Calu3 (cell line): ENCODE measurements at regions of chr5 and their contacts with region 1.

Region 1: DNA sequence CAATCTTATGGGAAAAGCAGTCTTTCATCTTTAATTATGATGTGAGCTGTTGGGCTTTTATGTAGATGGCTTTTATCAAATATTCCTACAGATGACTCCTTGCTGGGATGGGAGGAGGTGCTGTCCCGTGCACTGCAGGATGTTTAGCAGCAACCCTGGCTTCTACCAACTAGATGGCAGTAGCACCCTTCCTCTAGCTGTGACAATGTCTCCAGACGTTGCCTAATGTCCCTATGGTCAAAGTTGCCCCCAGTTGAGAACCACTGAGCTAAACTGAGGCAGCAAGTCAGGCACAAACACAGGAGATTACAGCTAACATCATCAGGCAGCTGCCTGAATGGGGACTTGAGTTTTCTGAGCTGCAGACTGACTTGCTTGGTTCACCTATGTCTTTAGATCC is 401.9 kb upstream of the PDE4D start:
- DNase-seq: peak; percentile 34
- H3K4me3 Mint-ChIP-seq: no peak overlapping the region
- H3K27ac Mint-ChIP-seq: no peak overlapping the region
- H3K4me1 Mint-ChIP-seq: no peaks in the 10 kb centered on the region
- H3K27me3 Mint-ChIP-seq: peaks cover 8% of the 10 kb centered on the region
- CTCF ChIP-seq: peak; percentile 49

Region 2: DNA sequence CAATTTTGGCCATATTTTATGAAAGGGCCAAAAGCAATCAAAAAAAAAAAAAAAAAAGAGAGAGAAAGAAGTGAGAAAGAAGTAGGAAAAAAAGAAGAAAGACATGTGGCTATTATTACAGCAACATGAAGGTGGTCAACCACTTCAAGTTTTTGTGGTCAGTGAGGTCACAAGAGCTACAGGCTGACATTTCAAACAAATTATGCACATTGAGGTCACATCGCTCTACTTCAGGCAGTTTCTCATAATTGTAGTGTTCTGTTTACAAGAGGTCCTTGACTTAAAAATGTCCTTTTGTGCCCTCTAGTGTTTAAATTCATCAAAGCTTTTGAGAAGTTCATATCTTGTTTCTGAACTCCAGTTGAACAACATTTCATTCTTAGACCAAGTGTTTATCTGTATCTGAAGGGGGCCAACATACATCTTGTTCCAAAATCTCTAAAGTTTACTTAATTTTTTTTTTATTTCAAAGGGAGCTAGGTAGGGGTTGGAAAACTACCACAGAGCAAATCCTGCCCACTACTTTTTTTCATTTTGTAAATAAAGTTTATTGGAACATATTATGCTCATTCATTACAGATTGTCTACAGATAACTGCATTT is 915.0 kb before region 1 on chr5:
- CTCF ChIA-PET with region 1: no interaction called
- intact Hi-C with region 1: no loop called
- DNase-seq: no peak
- H3K4me3 Mint-ChIP-seq: no peak overlapping the region
- H3K27ac Mint-ChIP-seq: no peak overlapping the region
- H3K4me1 Mint-ChIP-seq: no peaks in the 10 kb centered on the region
- H3K27me3 Mint-ChIP-seq: no peaks in the 10 kb centered on the region
- CTCF ChIP-seq: peak; percentile 37

Region 3: DNA sequence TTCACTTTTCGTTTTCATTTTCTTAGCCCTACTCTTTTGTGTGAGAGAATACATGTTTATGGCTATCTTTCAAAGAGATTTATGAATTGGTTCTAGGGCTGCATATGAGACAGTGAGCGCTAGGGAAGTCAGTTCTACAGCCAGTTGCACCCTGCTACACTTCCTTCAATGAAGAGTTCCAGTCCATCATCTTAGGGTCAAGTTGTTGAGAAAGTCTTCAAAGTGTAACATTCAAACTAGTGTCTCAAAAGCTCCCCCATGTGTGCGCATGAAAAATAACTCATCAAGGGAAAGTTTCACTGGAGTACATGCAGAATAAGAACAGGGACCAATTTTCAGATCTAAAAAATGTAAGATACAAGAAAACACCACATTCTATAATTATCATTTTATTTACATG is 87.3 kb after region 1 on chr5:
- CTCF ChIA-PET with region 1: no interaction called
- intact Hi-C with region 1: loop called (anchors 1 kb)
- DNase-seq: peak; percentile 14
- H3K4me3 Mint-ChIP-seq: no peak overlapping the region
- H3K27ac Mint-ChIP-seq: no peak overlapping the region
- H3K4me1 Mint-ChIP-seq: no peaks in the 10 kb centered on the region
- H3K27me3 Mint-ChIP-seq: peaks cover 28% of the 10 kb centered on the region
- CTCF ChIP-seq: no peak

Region 4: DNA sequence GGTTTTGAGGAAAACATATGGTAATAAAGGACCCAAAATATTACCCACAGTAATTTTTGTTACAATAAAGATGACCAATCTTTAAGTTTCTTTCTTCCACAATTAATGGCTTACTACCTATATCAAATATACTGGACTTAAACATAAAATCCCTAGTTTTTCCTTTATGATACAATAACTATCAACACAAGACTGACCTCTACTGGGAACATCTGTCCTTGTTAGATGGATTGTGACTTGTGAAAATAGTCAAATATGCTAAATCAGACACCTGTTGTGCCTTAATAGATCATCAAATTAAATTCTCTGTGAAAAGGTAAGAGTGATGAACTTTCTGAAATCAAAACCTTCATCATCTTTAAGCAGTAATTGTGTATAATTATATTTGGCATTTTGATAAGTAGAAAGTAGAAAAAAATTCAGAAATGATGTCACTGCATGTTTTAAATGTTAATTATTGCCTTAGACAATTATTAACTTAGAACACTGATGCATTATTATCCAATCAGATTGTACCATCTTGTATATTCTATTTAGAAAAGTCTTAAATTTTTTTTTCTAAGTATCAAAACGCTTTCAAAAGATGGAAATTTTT is 291.0 kb after region 1 on chr5:
- CTCF ChIA-PET with region 1: no interaction called
- intact Hi-C with region 1: loop called (anchors 1 kb)
- DNase-seq: no peak
- H3K4me3 Mint-ChIP-seq: no peak overlapping the region
- H3K27ac Mint-ChIP-seq: no peak overlapping the region
- H3K4me1 Mint-ChIP-seq: no peaks in the 10 kb centered on the region
- H3K27me3 Mint-ChIP-seq: no peaks in the 10 kb centered on the region
- CTCF ChIP-seq: no peak

Region 5: DNA sequence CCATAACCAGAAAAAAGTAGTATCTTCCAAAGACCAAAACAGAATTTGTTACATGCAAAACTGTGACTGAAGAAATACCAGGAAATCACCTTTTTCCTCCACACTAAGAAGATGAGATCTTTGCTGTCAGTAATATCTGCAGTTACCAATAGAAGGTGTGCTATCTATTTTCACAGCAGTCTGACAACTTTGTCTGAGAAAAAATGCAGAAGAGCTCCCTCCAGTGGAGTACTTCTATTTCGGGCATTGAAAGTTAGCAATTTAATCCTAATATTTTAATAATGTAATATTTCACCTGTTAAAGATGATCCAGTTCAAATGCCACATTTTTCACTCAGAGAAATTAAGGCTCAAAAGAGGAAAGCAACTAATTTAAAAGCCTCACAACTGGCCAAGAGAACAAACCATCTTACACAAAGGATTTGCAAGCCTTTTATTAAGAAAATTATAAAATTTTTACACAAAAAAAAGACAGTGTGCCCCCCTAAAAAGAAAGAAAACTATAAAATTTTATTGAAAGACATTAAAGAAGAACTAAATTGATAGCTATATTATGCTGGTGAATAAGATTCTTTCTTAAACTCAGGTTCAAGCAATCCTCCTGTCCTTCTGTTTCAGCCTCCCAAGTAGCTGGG is 354.0 kb after region 1 on chr5:
- CTCF ChIA-PET with region 1: no interaction called
- intact Hi-C with region 1: loop called (anchors 5 kb)
- DNase-seq: peak; percentile 26
- H3K4me3 Mint-ChIP-seq: no peak overlapping the region
- H3K27ac Mint-ChIP-seq: no peak overlapping the region
- H3K4me1 Mint-ChIP-seq: peaks cover 28% of the 10 kb centered on the region
- H3K27me3 Mint-ChIP-seq: no peaks in the 10 kb centered on the region
- CTCF ChIP-seq: peak; percentile 46